ENCODE measurements at regions of chr10 and their contacts with region 1.

Region 1: DNA sequence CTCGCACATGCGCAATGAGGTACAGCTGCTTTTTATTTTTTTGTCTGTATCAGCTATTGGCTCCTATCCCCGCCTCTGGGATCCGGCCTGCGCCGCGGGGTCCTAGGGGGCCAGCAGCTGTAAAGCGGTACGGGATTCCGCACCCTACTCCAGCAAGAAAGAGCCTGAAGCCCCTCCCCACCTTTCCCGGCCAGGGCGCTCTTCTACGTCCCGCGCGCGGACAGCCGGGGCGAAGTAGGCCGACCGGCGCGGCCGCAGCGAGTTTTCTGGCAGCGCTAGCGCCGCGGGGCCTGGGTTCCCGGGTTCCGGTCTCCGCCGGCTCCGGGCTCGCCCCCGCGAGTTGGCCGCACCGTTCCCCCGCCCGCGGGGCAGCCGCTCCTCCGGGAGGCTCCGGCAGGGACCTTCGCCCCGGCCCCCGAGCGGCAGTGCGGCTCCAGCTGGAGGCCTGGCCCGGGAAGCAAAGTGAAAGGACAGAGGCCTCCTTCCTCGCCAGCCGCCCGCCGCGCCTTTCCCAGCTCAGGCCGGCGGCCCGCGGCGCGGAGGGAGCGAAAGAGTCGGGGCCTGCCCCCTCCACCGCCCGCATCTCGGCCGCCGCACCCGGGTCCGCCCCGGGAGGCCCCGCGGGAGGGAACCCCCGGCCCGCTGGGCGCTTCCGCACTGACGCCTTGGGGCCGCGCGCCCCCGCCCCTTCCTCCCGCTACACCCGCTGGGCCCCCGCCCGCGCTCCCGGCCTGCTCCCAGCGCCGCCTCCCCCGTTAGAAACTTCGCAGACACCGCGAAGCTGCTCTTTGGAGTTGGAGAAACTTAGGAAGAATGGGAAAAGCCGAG is 4.7 kb upstream of the SPAG6 start:
- DNase-seq: peak; percentile 77
- ATAC-seq: peak; percentile 61
- H3K4me3 Mint-ChIP-seq: peak overlapping the region; percentile 90
- H3K27ac Mint-ChIP-seq: peak overlapping the region; percentile 88
- H3K4me1 Mint-ChIP-seq: peaks cover 34% of the 10 kb centered on the region
- H3K27me3 Mint-ChIP-seq: peaks cover 45% of the 10 kb centered on the region
- CTCF ChIP-seq: no peak

Region 2: GRCh38 chr10:21516242-21517131 is 824.1 kb before region 1 on chr10:
- CTCF ChIA-PET with region 1: interaction called, 4 read pairs
- POLR2A ChIA-PET with region 1: interaction called, 3 read pairs
- intact Hi-C with region 1: loop called (anchors 1 kb)
- DNase-seq: peak; percentile 48
- ATAC-seq: peak; percentile 79
- H3K4me3 Mint-ChIP-seq: peak overlapping the region; percentile 82
- H3K27ac Mint-ChIP-seq: no peak overlapping the region
- H3K4me1 Mint-ChIP-seq: peaks cover 38% of the 10 kb centered on the region
- H3K27me3 Mint-ChIP-seq: peaks cover 76% of the 10 kb centered on the region
- CTCF ChIP-seq: no peak

Region 3: GRCh38 chr10:22003079-22003913 is 337.3 kb before region 1 on chr10 and contains the start of gene DNAJC1:
- CTCF ChIA-PET with region 1: no interaction called
- POLR2A ChIA-PET with region 1: interaction called, 23 read pairs
- intact Hi-C with region 1: loop called (anchors 1 kb)
- DNase-seq: peak; percentile 98
- ATAC-seq: peak; percentile 92
- H3K4me3 Mint-ChIP-seq: peak within 1 kb of the TSS; percentile 87
- H3K27ac Mint-ChIP-seq: peak within 1 kb of the TSS; percentile 91
- H3K4me1 Mint-ChIP-seq: peaks cover 41% of the 10 kb centered on the region
- H3K27me3 Mint-ChIP-seq: no peaks in the 10 kb centered on the region
- CTCF ChIP-seq: no peak
- total RNA-seq, gene DNAJC1: 9.2 and 10.9 TPM in 2 replicates

Region 4: GRCh38 chr10:22316285-22317120 is 24.1 kb before region 1 on chr10 and contains the start of gene COMMD3:
- CTCF ChIA-PET with region 1: interaction called, 5 read pairs
- POLR2A ChIA-PET with region 1: interaction called, 41 read pairs
- intact Hi-C with region 1: loop called (anchors 1 kb)
- DNase-seq: peak; percentile 86
- ATAC-seq: peak; percentile 65
- H3K4me3 Mint-ChIP-seq: peak within 1 kb of the TSS; percentile 97
- H3K27ac Mint-ChIP-seq: peak within 1 kb of the TSS; percentile 98
- H3K4me1 Mint-ChIP-seq: peaks cover 40% of the 10 kb centered on the region
- H3K27me3 Mint-ChIP-seq: no peaks in the 10 kb centered on the region
- CTCF ChIP-seq: no peak
- total RNA-seq, gene COMMD3: 68.2 and 72.8 TPM in 2 replicates

Region 5: DNA sequence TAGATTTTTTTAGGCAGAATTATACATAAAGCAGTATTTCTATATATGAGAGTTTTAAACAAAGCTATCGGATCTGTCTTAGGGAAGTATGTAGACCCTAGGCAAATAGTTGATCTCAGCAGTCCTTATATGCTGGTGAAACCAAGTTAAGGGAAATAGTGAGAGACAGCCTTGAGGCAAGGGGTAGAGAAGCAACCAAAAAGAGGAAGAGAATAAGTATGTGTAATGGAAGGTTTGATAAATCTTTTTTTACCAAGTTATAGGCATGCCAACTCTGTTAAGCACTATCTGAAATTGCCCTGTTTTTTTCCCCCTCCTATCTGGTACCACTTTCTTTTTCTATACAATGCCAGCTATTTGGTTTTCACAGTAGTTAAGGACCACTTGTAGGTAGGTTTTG is 24.7 kb after region 1 on chr10:
- CTCF ChIA-PET with region 1: no interaction called
- POLR2A ChIA-PET with region 1: interaction called, 10 read pairs
- intact Hi-C with region 1: loop called (anchors 2 kb)
- DNase-seq: no peak
- ATAC-seq: peak; percentile 83
- H3K4me3 Mint-ChIP-seq: no peak overlapping the region
- H3K27ac Mint-ChIP-seq: peak overlapping the region; percentile 57
- H3K4me1 Mint-ChIP-seq: peaks cover 29% of the 10 kb centered on the region
- H3K27me3 Mint-ChIP-seq: no peaks in the 10 kb centered on the region
- CTCF ChIP-seq: no peak